Left cardiac atrium (tissue), 4 donors: ENCODE measurements at regions of chr11 and their contacts with region 1.

Region 1: GRCh38 chr11:121451986-121452608 is at the start of gene SORL1:
- DNase-seq: peak; percentile 78
- ATAC-seq: peak; percentile 92 to 95
- total RNA-seq, gene SORL1: 9.6 to 10.6 TPM

Region 2: DNA sequence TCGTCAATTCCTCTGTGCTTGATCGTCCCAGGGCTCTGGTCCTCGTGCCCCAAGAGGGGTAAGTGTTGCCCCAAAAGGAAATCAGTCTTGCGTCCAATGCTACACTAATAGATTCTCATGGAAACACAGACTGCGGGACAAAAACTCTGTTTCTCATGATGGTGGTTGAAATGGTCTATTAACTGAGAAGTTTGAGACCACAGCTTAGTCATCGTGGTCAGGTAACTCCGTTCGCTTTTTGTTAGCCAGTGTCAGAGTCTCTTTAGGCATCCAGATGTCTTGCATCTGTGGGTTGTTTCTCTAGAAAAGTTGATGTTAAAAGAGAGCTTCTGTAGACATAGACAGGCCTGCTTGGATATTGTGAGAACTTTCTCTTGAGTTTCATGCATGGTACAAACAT is 105.3 kb after region 1 on chr11:
- intact Hi-C with region 1: no loop called
- DNase-seq: no peak
- ATAC-seq: no peak

Region 3: DNA sequence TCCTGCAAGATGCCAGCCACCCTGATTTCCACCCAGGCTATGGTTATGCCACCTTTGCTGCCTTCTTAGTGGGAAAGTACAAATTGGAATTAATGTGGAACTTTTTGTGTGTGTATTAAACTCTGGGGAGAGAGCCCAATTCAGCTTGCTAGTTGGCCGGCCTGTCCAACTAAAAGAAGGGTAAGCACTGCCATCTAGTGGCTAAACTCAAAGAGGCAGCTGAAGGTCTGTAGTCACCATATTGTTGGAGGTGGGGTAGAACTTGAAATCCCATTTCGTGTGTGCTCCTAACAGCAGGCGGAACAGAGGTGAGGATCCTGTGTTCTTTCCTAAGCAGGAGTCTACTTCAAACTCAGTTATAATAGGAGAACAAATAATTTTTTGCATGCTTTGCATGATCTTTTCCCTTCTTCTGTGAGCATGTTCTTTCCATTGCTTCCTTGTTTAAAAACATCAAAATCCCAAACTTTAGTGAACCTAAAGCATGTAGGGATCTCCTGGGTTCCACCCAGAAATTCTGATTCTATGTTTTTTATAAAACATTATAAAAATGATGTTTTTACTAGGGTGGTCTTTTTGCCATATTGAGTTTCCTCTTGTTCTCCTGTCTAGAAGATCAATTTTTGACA is 139.4 kb after region 1 on chr11:
- intact Hi-C with region 1: loop called in 1 of 2 experiments (anchors 5 kb)
- DNase-seq: peak; percentile 53
- ATAC-seq: peak; percentile 69 to 70